CD8-positive, alpha-beta T cell (primary cell): ENCODE measurements at regions of chr10 and their contacts with region 1.

Region 1: DNA sequence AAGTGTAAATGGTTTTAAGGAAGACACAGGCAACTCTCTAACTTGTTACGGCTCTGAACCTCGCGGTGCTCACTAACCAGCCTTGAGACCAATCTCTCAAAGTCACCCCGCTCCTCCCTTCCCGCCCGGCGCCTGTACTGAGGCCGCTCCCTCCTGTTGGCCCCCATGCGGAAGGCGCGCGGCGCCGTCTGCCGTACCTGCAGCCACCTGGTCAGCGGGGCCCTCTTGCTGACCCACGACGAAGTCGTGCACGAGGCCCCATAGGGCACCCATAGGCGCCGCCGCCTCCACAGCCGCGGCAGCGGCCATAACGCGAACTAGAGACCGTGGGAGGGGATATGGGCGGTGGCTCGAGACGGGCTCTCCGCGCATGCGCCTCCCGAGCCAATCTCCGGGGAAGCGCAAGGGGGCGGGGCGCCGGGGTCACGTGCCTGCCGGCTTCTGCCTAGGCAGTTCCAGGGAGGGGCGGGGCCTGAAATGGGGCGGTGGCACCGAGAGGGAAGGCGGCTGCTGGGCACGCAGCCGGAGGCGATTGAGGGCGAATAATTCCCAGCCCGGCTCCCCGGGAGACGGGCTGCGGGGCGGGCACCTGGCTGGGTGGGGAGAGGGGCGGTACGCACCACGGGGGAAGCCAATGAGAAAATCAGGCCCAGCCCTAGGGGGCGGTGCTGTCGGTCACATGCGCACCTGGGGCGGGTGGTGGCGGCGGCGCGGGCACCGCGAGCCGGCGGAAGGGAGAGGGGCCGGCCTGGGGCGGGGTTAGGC is at the start of gene MMS19:
- DNase-seq: peak; percentile 98 to 100 (median 99)
- ATAC-seq: peak; percentile 78
- H3K4me3 ChIP-seq: peak within 1 kb of the TSS; percentile 73 to 76
- H3K4me3 Mint-ChIP-seq: peak within 1 kb of the TSS; percentile 97
- H3K27ac ChIP-seq: peak within 1 kb of the TSS; percentile 73 to 83
- H3K27ac Mint-ChIP-seq: peak within 1 kb of the TSS; percentile 96
- H3K4me1 ChIP-seq: peaks cover 42% of the 10 kb centered on the region
- H3K4me1 Mint-ChIP-seq: peaks cover 42% of the 10 kb centered on the region
- H3K27me3 ChIP-seq: peaks cover 4 to 5% of the 10 kb centered on the region in 2 experiments
- H3K27me3 Mint-ChIP-seq: peaks cover 15% of the 10 kb centered on the region
- CTCF ChIP-seq: no peak
- total RNA-seq, gene MMS19: 48.4 to 49.5 TPM

Region 2: DNA sequence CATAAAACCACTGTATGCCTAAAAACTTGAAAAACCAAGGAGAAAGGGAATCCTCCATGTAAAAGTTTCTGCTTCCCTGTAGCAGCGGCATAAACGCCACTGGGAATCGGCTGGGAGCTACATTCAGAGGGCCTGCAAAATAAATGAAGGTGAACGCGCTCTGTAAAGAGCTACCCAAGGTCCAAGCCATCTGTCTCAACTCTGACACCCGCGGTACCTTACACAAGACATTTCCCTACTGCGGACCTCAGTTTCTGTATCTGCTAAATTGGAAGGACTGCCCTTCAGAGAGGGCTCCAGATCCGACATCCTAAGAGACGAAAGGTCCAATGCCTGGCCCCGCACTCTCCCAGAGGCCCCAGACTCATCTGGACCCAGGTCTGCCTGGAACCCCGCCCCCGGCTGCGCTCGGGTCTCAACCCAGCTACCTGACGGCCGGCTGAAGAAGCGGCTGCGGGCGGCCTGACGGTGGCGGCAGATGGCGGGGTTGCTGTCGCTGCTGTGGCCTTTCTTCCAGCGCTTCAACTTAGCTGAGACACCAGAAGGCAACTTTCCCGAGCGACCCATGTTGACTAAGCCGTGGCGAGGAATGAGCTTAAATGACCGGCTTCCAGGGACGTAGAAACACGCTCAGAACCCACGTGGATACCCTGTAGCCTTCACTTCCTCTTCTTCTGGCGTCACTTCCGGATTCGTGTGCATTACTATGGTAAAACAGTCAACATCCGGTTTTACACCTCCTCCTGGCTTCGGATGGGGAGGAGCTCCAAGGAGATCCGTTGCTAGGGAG is 97.4 kb before region 1 on chr10 and contains the start of gene RRP12:
- CTCF ChIA-PET with region 1: no interaction called
- POLR2A ChIA-PET with region 1: no interaction called
- intact Hi-C with region 1: loop called (anchors 1 to 2 kb)
- DNase-seq: peak; percentile 65 to 99 (median 81)
- ATAC-seq: peak; percentile 93
- H3K4me3 ChIP-seq: peak within 1 kb of the TSS; percentile 69 to 88
- H3K4me3 Mint-ChIP-seq: peak within 1 kb of the TSS; percentile 98
- H3K27ac ChIP-seq: peak within 1 kb of the TSS; percentile 93 to 95
- H3K27ac Mint-ChIP-seq: peak within 1 kb of the TSS; percentile 96
- H3K4me1 ChIP-seq: peaks cover 14% of the 10 kb centered on the region
- H3K4me1 Mint-ChIP-seq: peaks cover 16% of the 10 kb centered on the region
- H3K27me3 ChIP-seq: no peaks in the 10 kb centered on the region
- H3K27me3 Mint-ChIP-seq: no peaks in the 10 kb centered on the region
- CTCF ChIP-seq: no peak
- total RNA-seq, gene RRP12: 104 to 107 TPM

Region 3: DNA sequence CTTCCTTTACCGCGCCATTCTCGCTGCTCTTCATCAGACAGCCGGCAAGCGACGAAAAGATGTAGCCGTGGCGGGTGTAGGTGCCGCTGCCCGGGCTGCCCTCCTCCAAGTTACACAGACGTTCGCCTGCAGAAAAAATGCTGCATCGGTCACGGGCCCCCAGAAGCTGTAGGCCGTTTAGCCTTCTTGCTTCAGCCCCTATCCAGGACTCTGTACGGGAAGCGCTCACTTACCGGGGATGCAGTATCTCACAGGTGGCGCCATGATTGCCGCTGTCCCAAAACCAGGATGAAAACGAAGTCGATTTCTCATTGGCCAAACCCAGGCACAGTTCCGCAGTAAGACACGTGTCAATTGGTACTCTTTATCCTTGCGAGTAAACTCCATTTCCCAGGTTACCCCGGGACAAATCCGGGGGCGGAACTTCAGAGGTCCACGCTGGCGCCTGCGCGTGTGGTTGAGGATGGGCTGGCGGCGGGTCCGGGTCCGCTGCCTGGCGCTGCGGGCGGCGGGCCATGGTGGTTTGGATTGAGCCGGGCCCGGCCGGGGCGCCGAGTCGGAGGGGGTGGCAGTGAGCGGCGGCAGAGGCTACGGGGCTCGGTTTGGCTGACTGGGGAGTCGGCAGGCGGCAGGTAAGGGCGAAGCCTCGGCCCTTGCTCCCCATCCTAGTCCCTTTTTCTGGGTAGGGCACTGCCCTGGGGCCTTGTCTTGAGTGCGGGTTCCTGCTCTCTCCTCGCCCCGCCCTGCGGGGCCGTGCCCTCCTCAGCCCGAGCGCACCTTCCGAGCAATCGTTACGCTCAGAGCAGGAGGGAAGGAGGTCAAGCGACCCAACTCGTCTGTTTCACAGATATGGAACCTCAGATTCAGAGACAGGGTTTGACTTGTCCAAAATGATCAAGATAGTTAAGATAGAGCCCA is 52.3 kb before region 1 on chr10 and contains the starts of genes EXOSC1 and ZDHHC16:
- CTCF ChIA-PET with region 1: interaction called, 3 read pairs
- POLR2A ChIA-PET with region 1: no interaction called
- intact Hi-C with region 1: loop called (anchors 1 kb)
- DNase-seq: peak; percentile 73 to 95 (median 89)
- ATAC-seq: peak; percentile 97
- H3K4me3 ChIP-seq: peak within 1 kb of the TSS; percentile 89 to 95
- H3K4me3 Mint-ChIP-seq: peak within 1 kb of the TSS; percentile 99
- H3K27ac ChIP-seq: peak within 1 kb of the TSS; percentile 69 to 75
- H3K27ac Mint-ChIP-seq: peak within 1 kb of the TSS; percentile 94
- H3K4me1 ChIP-seq: peaks cover 24% of the 10 kb centered on the region
- H3K4me1 Mint-ChIP-seq: peaks cover 47% of the 10 kb centered on the region
- H3K27me3 ChIP-seq: no peaks in the 10 kb centered on the region
- H3K27me3 Mint-ChIP-seq: no peaks in the 10 kb centered on the region
- CTCF ChIP-seq: no peak
- total RNA-seq, gene EXOSC1: 30.2 to 30.4 TPM
- total RNA-seq, gene ZDHHC16: 4.7 to 6.2 TPM

Region 4: GRCh38 chr10:97553575-97554031 is 55.3 kb after region 1 on chr10:
- CTCF ChIA-PET with region 1: interaction called, 11 read pairs
- POLR2A ChIA-PET with region 1: no interaction called
- intact Hi-C with region 1: no loop called
- DNase-seq: peak; percentile 30 to 72 (median 56)
- ATAC-seq: peak; percentile 79
- H3K4me3 ChIP-seq: no peak overlapping the region
- H3K4me3 Mint-ChIP-seq: no peak overlapping the region
- H3K27ac ChIP-seq: no peak overlapping the region
- H3K27ac Mint-ChIP-seq: no peak overlapping the region
- H3K4me1 ChIP-seq: no peaks in the 10 kb centered on the region
- H3K4me1 Mint-ChIP-seq: peaks cover 2% of the 10 kb centered on the region
- H3K27me3 ChIP-seq: no peaks in the 10 kb centered on the region
- H3K27me3 Mint-ChIP-seq: no peaks in the 10 kb centered on the region
- CTCF ChIP-seq: peak; percentile 52

Region 5: DNA sequence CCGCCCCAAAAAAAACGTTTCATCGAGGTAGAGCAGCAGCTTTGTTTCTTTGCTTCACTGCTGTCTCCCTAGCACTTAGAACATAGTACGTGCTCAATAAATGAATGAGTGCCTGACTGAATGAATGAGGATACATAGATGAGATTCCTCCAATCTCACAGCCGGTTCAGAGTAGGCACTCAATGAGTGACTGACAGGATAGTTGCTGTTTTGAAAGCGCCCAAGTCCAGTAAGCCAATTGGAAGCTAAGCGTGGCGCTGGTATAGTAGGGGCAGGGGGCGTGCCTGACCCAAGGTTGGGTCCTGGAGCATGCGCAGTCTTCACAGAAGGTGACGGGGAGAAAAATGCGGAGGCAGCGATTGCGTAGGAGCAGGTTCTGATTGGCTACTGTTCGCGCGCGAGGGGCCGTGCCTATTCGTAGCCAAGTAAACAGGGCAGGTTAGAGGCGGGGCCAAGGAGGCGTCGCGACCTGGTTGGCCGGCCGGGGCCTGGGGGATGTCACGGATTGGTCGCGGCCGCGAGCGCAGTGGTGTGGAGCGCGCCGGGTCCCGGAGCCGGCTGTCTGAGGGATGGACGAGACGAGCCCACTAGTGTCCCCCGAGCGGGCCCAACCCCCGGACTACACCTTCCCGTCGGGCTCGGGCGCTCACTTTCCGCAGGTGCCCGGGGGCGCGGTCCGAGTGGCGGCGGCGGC is 142.1 kb after region 1 on chr10 and contains the start of gene PI4K2A:
- CTCF ChIA-PET with region 1: no interaction called
- POLR2A ChIA-PET with region 1: no interaction called
- intact Hi-C with region 1: loop called in 1 of 2 experiments (anchors 1 kb)
- DNase-seq: peak; percentile 97 to 100 (median 98)
- ATAC-seq: peak; percentile 97
- H3K4me3 ChIP-seq: peak within 1 kb of the TSS; percentile 58 to 84
- H3K4me3 Mint-ChIP-seq: peak within 1 kb of the TSS; percentile 95
- H3K27ac ChIP-seq: peak within 1 kb of the TSS; percentile 54 to 55
- H3K27ac Mint-ChIP-seq: peak within 1 kb of the TSS; percentile 90
- H3K4me1 ChIP-seq: peaks cover 10% of the 10 kb centered on the region
- H3K4me1 Mint-ChIP-seq: peaks cover 24% of the 10 kb centered on the region
- H3K27me3 ChIP-seq: no peaks in the 10 kb centered on the region
- H3K27me3 Mint-ChIP-seq: no peaks in the 10 kb centered on the region
- CTCF ChIP-seq: no peak
- total RNA-seq, gene PI4K2A: 37.6 to 37.7 TPM

Region 6: GRCh38 chr10:98134431-98135221 is 636.4 kb after region 1 on chr10 and contains the start of gene R3HCC1L:
- CTCF ChIA-PET with region 1: no interaction called
- POLR2A ChIA-PET with region 1: no interaction called
- intact Hi-C with region 1: loop called (anchors 2 to 5 kb)
- DNase-seq: peak; percentile 87 to 96 (median 93)
- ATAC-seq: peak; percentile 95
- H3K4me3 ChIP-seq: peak within 1 kb of the TSS; percentile 85
- H3K4me3 Mint-ChIP-seq: peak within 1 kb of the TSS; percentile 92
- H3K27ac ChIP-seq: peak within 1 kb of the TSS; percentile 91 to 93
- H3K27ac Mint-ChIP-seq: peak within 1 kb of the TSS; percentile 97
- H3K4me1 ChIP-seq: peaks cover 23% of the 10 kb centered on the region
- H3K4me1 Mint-ChIP-seq: peaks cover 48% of the 10 kb centered on the region
- H3K27me3 ChIP-seq: no peaks in the 10 kb centered on the region
- H3K27me3 Mint-ChIP-seq: no peaks in the 10 kb centered on the region
- CTCF ChIP-seq: no peak
- total RNA-seq, gene R3HCC1L: 13.6 to 13.7 TPM